ENCODE measurements at regions of chr9 and their contacts with region 1.

Region 1: DNA sequence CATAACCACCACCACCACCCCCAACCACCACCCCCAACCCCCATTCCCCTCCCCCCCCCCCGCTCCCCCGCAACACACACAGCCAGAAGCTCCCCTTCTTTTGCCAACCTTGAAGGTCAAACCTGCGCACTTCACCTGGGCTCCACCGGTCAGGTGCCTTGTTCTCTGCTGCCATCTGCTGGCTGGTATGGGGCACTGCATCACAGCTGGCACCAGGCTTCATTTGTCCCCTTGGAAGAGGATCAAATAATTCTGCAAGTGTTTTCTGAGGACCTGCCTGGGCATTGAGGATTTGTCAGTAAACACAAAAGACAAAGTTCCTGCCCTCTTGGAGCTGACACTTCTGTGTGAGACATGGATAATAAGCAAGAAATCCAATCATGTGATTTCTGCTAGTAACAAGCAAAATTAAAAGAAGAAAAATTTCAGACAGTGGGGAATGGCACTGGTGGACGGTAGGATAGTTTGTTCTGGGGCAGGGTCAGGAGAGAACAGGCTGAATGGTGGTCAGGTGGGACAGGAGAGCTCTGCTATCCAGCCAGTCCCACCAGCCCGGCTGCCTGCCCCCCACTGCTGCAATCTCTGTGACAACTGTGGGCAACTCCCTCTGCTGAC is 55.6 kb upstream of the LMX1B start:
- DNase-seq: peak; percentile 39
- ATAC-seq: peak; percentile 94
- H3K4me3 ChIP-seq: no peak overlapping the region
- H3K27ac ChIP-seq: no peak overlapping the region
- H3K4me1 ChIP-seq: no peaks in the 10 kb centered on the region
- H3K27me3 ChIP-seq: peaks cover 29% of the 10 kb centered on the region
- CTCF ChIP-seq: peak; percentile 89 to 99 (median 95)
- POLR2A ChIP-seq: no peak
- RAD21 ChIP-seq: peak; percentile 89

Region 2: DNA sequence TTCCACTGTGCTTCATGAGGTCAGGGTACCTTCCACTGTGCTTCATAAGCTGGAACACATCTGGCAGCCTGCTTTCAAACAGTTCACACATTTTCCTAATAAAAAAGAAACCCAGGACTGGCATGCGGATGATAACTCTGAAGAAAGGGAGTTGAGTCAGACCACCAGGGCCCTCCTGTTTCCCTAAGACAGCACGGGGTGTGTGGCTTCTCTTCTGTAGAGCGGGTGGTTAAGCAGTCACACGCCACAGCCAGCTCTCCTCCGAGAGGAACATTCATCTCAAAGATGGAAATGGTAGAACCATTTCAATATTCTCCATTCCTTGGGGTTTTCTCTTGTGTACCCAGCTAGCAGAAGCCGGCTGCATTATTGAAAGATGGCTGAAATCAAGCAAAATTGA is 72.5 kb before region 1 on chr9:
- CTCF ChIA-PET with region 1: no interaction called
- POLR2A ChIA-PET with region 1: no interaction called
- RAD21 ChIA-PET with region 1: no interaction called
- intact Hi-C with region 1: no loop called
- DNase-seq: no peak
- ATAC-seq: no peak
- H3K4me3 ChIP-seq: no peak overlapping the region
- H3K27ac ChIP-seq: no peak overlapping the region
- H3K4me1 ChIP-seq: no peaks in the 10 kb centered on the region
- H3K27me3 ChIP-seq: no peaks in the 10 kb centered on the region
- CTCF ChIP-seq: no peak
- POLR2A ChIP-seq: no peak
- RAD21 ChIP-seq: no peak

Region 3: GRCh38 chr9:126500684-126501382 is 57.3 kb before region 1 on chr9:
- CTCF ChIA-PET with region 1: interaction called, 84 read pairs
- POLR2A ChIA-PET with region 1: no interaction called
- RAD21 ChIA-PET with region 1: interaction called, 4 to 6 read pairs
- intact Hi-C with region 1: loop called (anchors 1 kb)
- DNase-seq: peak; percentile 19
- ATAC-seq: peak; percentile 82
- H3K4me3 ChIP-seq: no peak overlapping the region
- H3K27ac ChIP-seq: no peak overlapping the region; the same call in 1 of the 2 replicates
- H3K4me1 ChIP-seq: peaks cover 0 to 13% of the 10 kb centered on the region in 2 experiments; a peak in 1 of 4 replicates
- H3K27me3 ChIP-seq: no peaks in the 10 kb centered on the region
- CTCF ChIP-seq: peak; percentile 87 to 90 (median 88)
- POLR2A ChIP-seq: no peak
- RAD21 ChIP-seq: peak; percentile 91

Region 4: GRCh38 chr9:126516936-126517832 is 41.0 kb before region 1 on chr9:
- CTCF ChIA-PET with region 1: interaction called, 5 read pairs
- POLR2A ChIA-PET with region 1: no interaction called
- RAD21 ChIA-PET with region 1: no interaction called
- intact Hi-C with region 1: loop called (anchors 5 kb)
- DNase-seq: peak; percentile 6
- ATAC-seq: peak; percentile 57
- H3K4me3 ChIP-seq: peak overlapping the region; percentile 44 to 53
- H3K27ac ChIP-seq: no peak overlapping the region
- H3K4me1 ChIP-seq: peaks cover 14 to 21% of the 10 kb centered on the region in 2 experiments; a peak in 3 of 4 replicates
- H3K27me3 ChIP-seq: peaks cover 29% of the 10 kb centered on the region; the same call in 1 of the 2 replicates
- CTCF ChIP-seq: no peak
- POLR2A ChIP-seq: no peak
- RAD21 ChIP-seq: no peak

Region 5: GRCh38 chr9:126532019-126532462 is 26.1 kb before region 1 on chr9:
- CTCF ChIA-PET with region 1: interaction called, 10 read pairs
- POLR2A ChIA-PET with region 1: no interaction called
- RAD21 ChIA-PET with region 1: no interaction called
- intact Hi-C with region 1: no loop called
- DNase-seq: no peak
- ATAC-seq: no peak
- H3K4me3 ChIP-seq: no peak overlapping the region
- H3K27ac ChIP-seq: no peak overlapping the region
- H3K4me1 ChIP-seq: no peaks in the 10 kb centered on the region
- H3K27me3 ChIP-seq: no peaks in the 10 kb centered on the region
- CTCF ChIP-seq: no peak
- POLR2A ChIP-seq: no peak
- RAD21 ChIP-seq: no peak

Measured in HCT116 (cell line).